Activated B cell treated with CpG ODN at 0.5 μM for 24 hours (primary cell): ENCODE measurements at regions of chr6 and their contacts with region 1.

Region 1: DNA sequence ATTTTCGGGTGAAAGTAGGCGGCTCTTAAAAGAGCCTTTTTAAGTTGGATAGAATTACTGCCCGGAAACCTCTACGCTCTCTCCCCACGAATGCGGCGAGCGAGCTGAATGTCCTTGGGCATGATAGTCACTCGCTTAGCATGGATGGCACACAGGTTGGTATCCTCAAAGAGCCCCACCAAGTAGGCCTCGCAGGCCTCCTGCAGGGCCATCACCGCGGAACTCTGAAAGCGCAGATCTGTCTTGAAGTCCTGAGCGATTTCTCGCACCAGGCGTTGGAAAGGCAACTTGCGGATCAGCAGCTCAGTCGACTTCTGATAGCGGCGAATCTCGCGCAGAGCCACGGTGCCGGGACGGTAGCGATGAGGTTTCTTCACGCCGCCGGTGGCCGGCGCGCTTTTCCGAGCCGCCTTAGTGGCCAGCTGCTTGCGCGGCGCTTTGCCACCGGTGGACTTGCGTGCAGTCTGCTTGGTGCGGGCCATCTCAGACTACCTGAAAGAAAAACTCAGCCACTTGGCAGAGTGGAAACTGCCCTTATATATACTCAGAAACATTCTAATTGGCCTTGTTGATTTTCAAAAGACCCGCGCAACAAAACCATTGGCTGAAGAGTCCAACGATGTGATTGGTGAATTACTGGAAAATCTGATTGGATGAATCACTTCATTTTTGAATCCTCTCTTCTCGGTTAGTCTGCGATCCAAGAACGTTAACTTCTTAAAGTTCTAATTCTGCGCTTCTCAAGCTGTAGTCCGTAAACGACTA is 93.9 kb upstream of the BTN3A2 start:
- DNase-seq: peak; percentile 49
- ATAC-seq: peak; percentile 18
- H3K4me3 Mint-ChIP-seq: no peak overlapping the region
- H3K27ac Mint-ChIP-seq: no peak overlapping the region
- H3K4me1 Mint-ChIP-seq: peaks cover 24% of the 10 kb centered on the region
- H3K27me3 Mint-ChIP-seq: no peaks in the 10 kb centered on the region
- CTCF ChIP-seq: no peak

Region 2: DNA sequence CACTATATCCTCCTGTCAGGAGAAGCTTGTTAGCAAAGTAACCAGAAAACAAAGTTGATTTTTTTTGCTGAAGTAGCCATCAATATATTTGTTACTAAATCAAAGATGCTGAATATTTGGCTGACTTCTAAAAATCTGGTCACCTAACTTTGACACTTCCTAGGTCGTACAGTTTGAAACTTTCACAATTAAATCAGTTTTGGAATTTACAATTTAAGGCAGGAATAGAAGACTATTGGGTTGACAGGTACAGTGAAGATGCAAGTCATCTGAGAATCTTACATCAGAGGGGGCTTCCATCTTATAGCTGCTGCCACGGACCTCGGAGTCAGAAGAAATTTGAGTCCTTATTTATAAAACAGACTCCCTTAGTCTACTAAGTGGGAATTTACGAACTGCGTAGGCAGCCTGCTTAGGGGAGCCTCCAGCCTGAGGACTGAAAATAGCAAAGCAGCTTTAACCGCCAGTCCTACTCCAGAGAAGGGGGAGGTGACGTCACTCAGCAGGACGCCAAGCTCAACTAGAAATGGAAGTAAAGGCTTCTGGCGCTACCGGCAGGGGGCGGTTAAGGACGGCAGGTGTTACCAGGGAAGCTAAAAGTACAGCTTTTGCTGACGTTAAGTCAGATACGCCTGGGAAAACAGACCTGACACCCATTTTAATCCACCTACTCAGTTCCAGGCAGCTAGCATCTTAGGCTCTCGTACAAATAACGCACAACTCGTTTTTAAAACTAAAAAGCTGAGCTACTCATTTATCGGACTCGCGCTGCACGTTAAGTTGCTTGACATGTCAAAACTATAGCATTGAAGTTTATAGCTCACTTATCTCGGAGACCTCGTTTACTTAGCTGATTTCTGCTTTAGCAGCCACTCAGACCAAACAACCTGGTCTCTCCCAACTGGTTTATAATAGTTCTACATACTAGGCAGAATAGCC is 244.9 kb before region 1 on chr6:
- CTCF ChIA-PET with region 1: no interaction called
- POLR2A ChIA-PET with region 1: interaction called, 21 read pairs
- intact Hi-C with region 1: loop called (anchors 5 kb)
- DNase-seq: peak; percentile 76
- ATAC-seq: peak; percentile 39
- H3K4me3 Mint-ChIP-seq: peak overlapping the region; percentile 96
- H3K27ac Mint-ChIP-seq: peak overlapping the region; percentile 99
- H3K4me1 Mint-ChIP-seq: peaks cover 35% of the 10 kb centered on the region
- H3K27me3 Mint-ChIP-seq: peaks cover 2% of the 10 kb centered on the region
- CTCF ChIP-seq: no peak

Region 3: DNA sequence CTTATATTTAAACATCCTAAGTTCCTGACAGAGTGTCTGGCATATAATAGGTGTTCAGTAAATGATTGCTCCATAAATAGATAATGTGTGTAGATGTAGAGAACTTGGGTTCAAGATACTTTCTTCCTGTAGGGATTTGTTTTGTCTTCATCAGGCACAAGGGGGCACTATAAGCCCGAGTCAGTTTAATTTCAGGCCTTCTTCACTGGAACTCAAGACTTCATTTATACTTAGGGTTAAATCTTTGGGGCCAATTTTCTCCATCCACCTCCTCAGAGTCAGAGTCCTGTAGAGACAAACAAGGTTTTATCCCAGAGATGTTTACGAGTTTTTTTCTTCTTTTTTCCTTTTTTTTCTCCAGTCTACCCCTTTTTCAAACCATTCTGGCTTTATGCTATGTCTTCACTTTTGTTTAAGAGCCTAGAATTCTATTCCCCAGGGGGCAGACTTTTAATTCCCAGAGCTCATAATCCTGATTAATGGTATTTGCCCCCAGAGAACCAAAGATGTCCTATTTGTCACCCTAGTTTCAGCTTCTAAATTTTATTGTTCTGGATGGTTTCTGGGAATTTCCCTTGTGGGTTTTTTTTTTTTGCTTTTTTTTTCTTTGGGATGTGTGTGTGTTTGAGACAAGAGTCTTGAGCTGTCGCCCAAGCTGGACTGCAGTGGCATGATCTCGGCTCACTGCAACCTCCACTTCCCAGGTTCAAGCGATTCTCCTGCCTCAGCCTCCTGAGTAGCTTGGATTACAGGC is 95.5 kb before region 1 on chr6:
- CTCF ChIA-PET with region 1: interaction called, 6 read pairs
- POLR2A ChIA-PET with region 1: interaction called, 32 read pairs
- intact Hi-C with region 1: no loop called
- DNase-seq: no peak
- ATAC-seq: no peak
- H3K4me3 Mint-ChIP-seq: no peak overlapping the region
- H3K27ac Mint-ChIP-seq: peak overlapping the region; percentile 65
- H3K4me1 Mint-ChIP-seq: peaks cover 38% of the 10 kb centered on the region
- H3K27me3 Mint-ChIP-seq: no peaks in the 10 kb centered on the region
- CTCF ChIP-seq: no peak

Region 4: GRCh38 chr6:26234421-26235296 is 36.4 kb before region 1 on chr6:
- CTCF ChIA-PET with region 1: interaction called, 3 read pairs
- POLR2A ChIA-PET with region 1: interaction called, 195 read pairs
- intact Hi-C with region 1: loop called (anchors 1 kb)
- DNase-seq: peak; percentile 49
- ATAC-seq: peak; percentile 77
- H3K4me3 Mint-ChIP-seq: peak overlapping the region; percentile 89
- H3K27ac Mint-ChIP-seq: peak overlapping the region; percentile 97
- H3K4me1 Mint-ChIP-seq: peaks cover 26% of the 10 kb centered on the region
- H3K27me3 Mint-ChIP-seq: no peaks in the 10 kb centered on the region
- CTCF ChIP-seq: no peak

Region 5: DNA sequence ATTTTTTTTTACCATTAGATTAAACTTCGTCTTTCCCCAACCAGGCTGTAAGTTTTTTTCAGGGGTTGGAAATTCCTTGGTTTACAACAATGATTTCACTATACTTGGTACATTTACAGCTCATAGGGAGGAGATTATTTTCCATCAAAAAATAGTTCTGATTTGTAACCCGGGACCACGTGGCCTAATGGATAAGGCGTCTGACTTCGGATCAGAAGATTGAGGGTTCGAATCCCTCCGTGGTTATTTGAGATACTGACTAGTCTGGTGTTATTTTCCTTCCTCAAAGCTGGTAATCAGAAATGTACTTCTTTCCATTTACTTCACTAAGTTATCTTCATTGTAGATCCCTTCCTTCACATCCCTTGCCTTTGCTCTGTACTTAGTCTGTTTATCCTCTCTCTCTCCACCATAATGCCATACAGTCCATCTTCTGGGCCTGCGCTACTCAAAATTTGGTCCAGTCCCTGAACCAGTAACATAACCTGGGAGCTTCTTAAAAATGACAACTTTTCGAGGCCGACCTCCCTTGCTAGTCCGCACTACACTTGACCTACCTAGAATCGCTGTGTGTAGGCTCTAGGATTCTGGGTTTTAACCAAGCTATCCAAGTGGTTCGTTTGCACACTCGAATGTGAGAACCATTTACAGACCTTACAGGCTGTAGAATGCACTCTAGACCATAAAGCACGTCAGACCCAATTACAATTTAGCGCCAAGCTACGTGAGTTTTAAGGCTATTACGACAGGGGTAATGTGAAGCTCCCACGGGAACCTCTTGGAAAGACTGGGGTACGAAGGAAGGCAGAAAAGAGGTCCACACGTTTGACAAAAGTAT is 51.8 kb after region 1 on chr6:
- CTCF ChIA-PET with region 1: no interaction called
- POLR2A ChIA-PET with region 1: interaction called, 7 read pairs
- intact Hi-C with region 1: loop called (anchors 1 kb)
- DNase-seq: no peak
- ATAC-seq: peak; percentile 56
- H3K4me3 Mint-ChIP-seq: peak overlapping the region; percentile 89
- H3K27ac Mint-ChIP-seq: peak overlapping the region; percentile 85
- H3K4me1 Mint-ChIP-seq: peaks cover 25% of the 10 kb centered on the region
- H3K27me3 Mint-ChIP-seq: peaks cover 14% of the 10 kb centered on the region
- CTCF ChIP-seq: no peak

Region 6: GRCh38 chr6:26596579-26597388 is 325.7 kb after region 1 on chr6 and contains the start of gene ABT1:
- CTCF ChIA-PET with region 1: interaction called, 4 read pairs
- POLR2A ChIA-PET with region 1: interaction called, 6 read pairs
- intact Hi-C with region 1: loop called (anchors 1 kb)
- DNase-seq: peak; percentile 91
- ATAC-seq: peak; percentile 90
- H3K4me3 Mint-ChIP-seq: no peak within 1 kb of the TSS
- H3K27ac Mint-ChIP-seq: no peak within 1 kb of the TSS
- H3K4me1 Mint-ChIP-seq: peaks cover 17% of the 10 kb centered on the region
- H3K27me3 Mint-ChIP-seq: peaks cover 5% of the 10 kb centered on the region
- CTCF ChIP-seq: no peak
- total RNA-seq, gene ABT1: 30.7 and 30.8 TPM in 2 replicates

Region 7: DNA sequence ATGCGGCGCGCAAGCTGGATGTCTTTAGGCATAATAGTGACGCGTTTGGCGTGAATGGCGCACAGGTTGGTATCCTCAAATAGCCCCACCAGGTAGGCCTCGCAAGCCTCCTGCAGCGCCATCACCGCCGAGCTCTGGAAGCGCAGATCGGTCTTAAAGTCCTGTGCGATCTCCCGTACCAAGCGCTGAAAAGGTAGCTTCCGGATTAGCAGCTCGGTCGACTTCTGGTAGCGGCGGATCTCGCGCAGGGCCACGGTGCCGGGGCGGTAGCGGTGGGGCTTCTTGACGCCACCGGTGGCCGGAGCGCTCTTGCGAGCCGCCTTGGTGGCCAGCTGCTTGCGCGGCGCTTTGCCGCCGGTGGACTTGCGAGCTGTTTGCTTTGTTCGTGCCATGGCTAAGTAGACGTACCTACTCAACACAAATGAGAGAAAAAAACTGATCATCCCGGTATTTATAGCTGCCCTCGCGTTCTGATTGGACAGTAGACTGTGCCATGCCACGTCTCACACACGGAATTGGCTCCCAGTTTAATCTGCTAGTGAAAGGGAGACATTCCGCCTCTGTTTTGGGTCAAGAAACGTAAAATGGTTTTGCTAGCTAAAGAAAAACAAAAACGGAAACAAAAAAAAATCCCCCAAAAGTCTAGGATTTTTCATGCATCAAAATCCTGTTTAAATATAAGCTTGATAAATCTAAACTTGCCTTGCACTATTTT is 1601.0 kb after region 1 on chr6:
- CTCF ChIA-PET with region 1: no interaction called
- POLR2A ChIA-PET with region 1: interaction called, 9 read pairs
- intact Hi-C with region 1: loop called (anchors 2 kb)
- DNase-seq: peak; percentile 73
- ATAC-seq: peak; percentile 80
- H3K4me3 Mint-ChIP-seq: peak overlapping the region; percentile 94
- H3K27ac Mint-ChIP-seq: peak overlapping the region; percentile 95
- H3K4me1 Mint-ChIP-seq: peaks cover 36% of the 10 kb centered on the region
- H3K27me3 Mint-ChIP-seq: no peaks in the 10 kb centered on the region
- CTCF ChIP-seq: no peak